ENCODE measurements at regions of chr16 and their contacts with region 1.

Region 1: GRCh38 chr16:30585400-30586189 is at the start of gene ZNF785:
- DNase-seq: peak; percentile 99
- H3K4me3 ChIP-seq: peak within 1 kb of the TSS; percentile 39 to 69 (median 58)
- H3K27ac ChIP-seq: peak within 1 kb of the TSS; percentile 42
- H3K4me1 ChIP-seq: peaks cover 9% of the 10 kb centered on the region
- H3K27me3 ChIP-seq: no peaks in the 10 kb centered on the region
- CTCF ChIP-seq: peak in 1 of 2 donors; percentile 30
- total RNA-seq, gene ZNF785: 7.6 to 8.0 TPM

Region 2: GRCh38 chr16:30534368-30535105 is 51.1 kb before region 1 on chr16 and contains the start of gene ZNF747:
- CTCF ChIA-PET with region 1: no interaction called
- dilution Hi-C with region 1: no loop called
- in situ Hi-C with region 1: no loop called
- intact Hi-C with region 1: loop called (anchors 1 kb)
- DNase-seq: peak; percentile 75
- H3K4me3 ChIP-seq: peak within 1 kb of the TSS; percentile 50 to 64 (median 57)
- H3K27ac ChIP-seq: peak within 1 kb of the TSS; percentile 71
- H3K4me1 ChIP-seq: peaks cover 15% of the 10 kb centered on the region
- H3K27me3 ChIP-seq: no peaks in the 10 kb centered on the region
- CTCF ChIP-seq: peak in 1 of 2 donors; percentile 7
- total RNA-seq, gene ZNF747: 6.7 to 11.0 TPM